Breast epithelium (tissue), 4 donors: ENCODE measurements at regions of chr16 and their contacts with region 1.

Region 1: GRCh38 chr16:85959686-85960085 is 60.7 kb downstream of the IRF8 start:
- DNase-seq: no peak
- H3K4me3 ChIP-seq: no peak overlapping the region
- H3K27ac ChIP-seq: no peak overlapping the region
- H3K4me1 ChIP-seq: no peaks in the 10 kb centered on the region
- H3K27me3 ChIP-seq: peaks cover 0 to 28% of the 10 kb centered on the region in 2 donors
- CTCF ChIP-seq: no peak
- POLR2A ChIP-seq: no peak

Region 2: DNA sequence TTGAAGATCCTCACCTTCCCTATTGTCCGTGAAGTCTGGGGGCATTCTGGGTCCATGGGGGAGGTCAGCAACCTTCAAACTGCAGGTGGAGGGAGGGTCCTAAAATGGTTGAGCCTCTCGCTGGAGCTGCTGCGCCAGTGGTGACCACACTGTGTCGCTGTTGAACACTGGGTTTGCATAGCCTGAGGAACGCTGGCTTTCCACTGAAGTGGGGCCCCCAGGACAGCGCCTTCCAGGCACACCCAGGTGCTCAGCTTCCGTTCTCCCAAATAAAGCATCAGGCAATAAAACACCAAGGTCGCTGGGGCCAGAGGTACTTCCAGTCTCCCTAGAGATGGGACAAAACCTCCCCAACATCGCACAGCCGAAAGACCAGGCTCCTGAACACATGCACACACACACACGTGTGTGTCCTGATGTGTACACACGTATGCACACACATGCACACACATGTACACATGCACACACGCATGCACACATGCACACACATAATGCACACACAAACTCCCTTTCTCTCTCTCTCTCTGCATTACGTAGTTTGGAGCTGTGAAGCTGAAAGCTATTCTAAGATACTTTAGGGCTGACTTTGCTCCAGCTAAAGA is 59.9 kb after region 1 on chr16:
- intact Hi-C with region 1: loop called (anchors 2 kb)
- DNase-seq: no peak
- H3K4me3 ChIP-seq: no peak overlapping the region
- H3K27ac ChIP-seq: no peak overlapping the region
- H3K4me1 ChIP-seq: no peaks in the 10 kb centered on the region
- H3K27me3 ChIP-seq: peaks cover 0 to 50% of the 10 kb centered on the region in 2 donors
- CTCF ChIP-seq: no peak
- POLR2A ChIP-seq: no peak